GM12878 (cell line): ENCODE measurements at regions of chr6 and their contacts with region 1.

Region 1: GRCh38 chr6:113744861-113745260 is 112.3 kb upstream of the MARCKS start:
- DNase-seq: no peak
- ATAC-seq: no peak
- H3K4me3 ChIP-seq: no peak overlapping the region
- H3K27ac ChIP-seq: no peak overlapping the region
- H3K4me1 ChIP-seq: no peaks in the 10 kb centered on the region
- H3K27me3 ChIP-seq: no peaks in the 10 kb centered on the region
- CTCF ChIP-seq: no peak
- EP300 ChIP-seq: no peak
- POLR2A ChIP-seq: no peak
- RAD21 ChIP-seq: no peak

Region 2: DNA sequence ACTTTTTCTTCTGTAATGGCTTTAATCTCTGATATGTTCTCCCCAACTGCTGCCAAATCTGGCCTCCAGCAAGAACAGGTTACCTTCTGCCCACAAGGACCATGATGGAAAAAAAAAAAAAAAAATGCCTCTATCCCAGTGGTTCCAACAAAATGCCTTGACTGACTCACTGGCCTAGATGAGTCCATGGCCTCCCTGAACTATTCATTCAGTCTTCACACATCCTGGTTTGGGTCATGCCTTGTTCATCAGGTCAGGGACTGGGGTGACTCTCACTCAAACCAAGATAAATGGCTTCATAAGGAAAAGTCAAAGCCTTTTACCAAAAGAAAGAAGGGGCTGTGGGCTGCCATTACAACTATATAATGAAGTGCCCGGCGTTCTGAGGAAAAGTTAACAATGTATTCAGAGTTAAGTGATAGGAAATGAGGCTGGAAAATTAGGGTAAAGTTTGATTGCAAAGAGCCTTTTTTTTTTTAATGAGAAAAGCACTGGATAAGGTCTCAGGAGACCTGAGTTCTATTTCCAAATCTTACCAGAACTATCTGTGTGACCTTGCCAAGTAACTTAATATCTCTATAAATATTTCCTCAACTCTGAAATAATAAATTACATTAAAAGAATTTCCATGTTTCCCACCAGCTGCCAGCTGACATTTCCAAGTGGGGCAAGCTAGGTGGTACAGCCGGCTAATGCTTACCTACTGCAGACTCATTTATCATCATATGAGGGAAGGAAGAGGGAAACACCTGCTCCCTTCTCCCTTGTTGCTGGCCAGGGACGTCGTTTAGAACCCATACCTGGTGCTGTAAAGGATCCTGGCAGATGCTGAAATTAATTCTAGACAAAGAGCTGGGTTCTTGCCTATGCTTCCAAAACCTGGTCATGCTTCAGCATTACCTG is 267.7 kb before region 1 on chr6:
- CTCF ChIA-PET with region 1: no interaction called
- POLR2A ChIA-PET with region 1: no interaction called
- RAD21 ChIA-PET with region 1: no interaction called
- SMC1A ChIA-PET with region 1: no interaction called
- in situ Hi-C with region 1: no loop called
- intact Hi-C with region 1: no loop called
- DNase-seq: no peak
- ATAC-seq: no peak
- H3K4me3 ChIP-seq: no peak overlapping the region
- H3K27ac ChIP-seq: no peak overlapping the region
- H3K4me1 ChIP-seq: no peaks in the 10 kb centered on the region
- H3K27me3 ChIP-seq: no peaks in the 10 kb centered on the region
- CTCF ChIP-seq: no peak
- EP300 ChIP-seq: no peak
- POLR2A ChIP-seq: no peak
- RAD21 ChIP-seq: no peak

Region 3: GRCh38 chr6:113732384-113732966 is 12.4 kb before region 1 on chr6:
- CTCF ChIA-PET with region 1: interaction called, 4 read pairs
- POLR2A ChIA-PET with region 1: interaction called, 7 read pairs
- RAD21 ChIA-PET with region 1: no interaction called
- SMC1A ChIA-PET with region 1: interaction called, 15 read pairs
- in situ Hi-C with region 1: no loop called
- intact Hi-C with region 1: no loop called
- DNase-seq: no peak
- ATAC-seq: no peak
- H3K4me3 ChIP-seq: no peak overlapping the region
- H3K27ac ChIP-seq: no peak overlapping the region
- H3K4me1 ChIP-seq: no peaks in the 10 kb centered on the region
- H3K27me3 ChIP-seq: no peaks in the 10 kb centered on the region
- CTCF ChIP-seq: no peak
- EP300 ChIP-seq: no peak
- POLR2A ChIP-seq: no peak
- RAD21 ChIP-seq: no peak

Region 4: GRCh38 chr6:113980937-113981554 is 236.2 kb after region 1 on chr6:
- CTCF ChIA-PET with region 1: no interaction called
- POLR2A ChIA-PET with region 1: no interaction called
- RAD21 ChIA-PET with region 1: no interaction called
- SMC1A ChIA-PET with region 1: no interaction called
- in situ Hi-C with region 1: no loop called
- intact Hi-C with region 1: no loop called
- DNase-seq: no peak
- ATAC-seq: peak; percentile 92
- H3K4me3 ChIP-seq: no peak overlapping the region
- H3K27ac ChIP-seq: no peak overlapping the region
- H3K4me1 ChIP-seq: no peaks in the 10 kb centered on the region
- H3K27me3 ChIP-seq: no peaks in the 10 kb centered on the region
- CTCF ChIP-seq: peak; percentile 25 to 57 (median 45); a peak in 5 of 6 replicates
- EP300 ChIP-seq: no peak
- POLR2A ChIP-seq: no peak
- RAD21 ChIP-seq: 0 out of 2 replicates have a peak, but pooled peaks have one; percentile 15

Region 5: GRCh38 chr6:114024746-114025145 is 279.9 kb after region 1 on chr6:
- CTCF ChIA-PET with region 1: no interaction called
- POLR2A ChIA-PET with region 1: no interaction called
- RAD21 ChIA-PET with region 1: no interaction called
- SMC1A ChIA-PET with region 1: no interaction called
- in situ Hi-C with region 1: no loop called
- intact Hi-C with region 1: no loop called
- DNase-seq: no peak
- ATAC-seq: no peak
- H3K4me3 ChIP-seq: no peak overlapping the region
- H3K27ac ChIP-seq: no peak overlapping the region
- H3K4me1 ChIP-seq: no peaks in the 10 kb centered on the region
- H3K27me3 ChIP-seq: no peaks in the 10 kb centered on the region
- CTCF ChIP-seq: no peak
- EP300 ChIP-seq: no peak
- POLR2A ChIP-seq: no peak
- RAD21 ChIP-seq: no peak

Region 6: DNA sequence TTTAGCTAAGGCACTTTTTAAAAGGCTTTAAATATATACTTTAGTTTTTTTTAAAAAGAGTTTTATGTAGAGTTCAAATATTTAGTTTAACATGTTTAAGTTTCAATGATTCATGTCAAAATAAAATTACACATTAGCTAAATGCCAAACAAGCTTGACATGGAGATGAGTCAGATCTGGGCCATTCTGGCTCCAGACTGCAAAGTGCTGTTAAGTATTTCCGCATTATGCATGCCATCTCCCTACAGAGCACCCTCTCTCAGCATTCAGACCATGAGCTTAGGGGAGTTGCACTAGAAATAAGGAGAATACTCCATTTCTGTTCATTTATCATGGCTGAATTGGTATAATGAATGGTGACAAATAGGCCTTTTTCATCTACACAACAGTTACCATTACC is 619.4 kb after region 1 on chr6:
- CTCF ChIA-PET with region 1: no interaction called
- POLR2A ChIA-PET with region 1: no interaction called
- RAD21 ChIA-PET with region 1: no interaction called
- SMC1A ChIA-PET with region 1: no interaction called
- in situ Hi-C with region 1: no loop called
- intact Hi-C with region 1: no loop called
- DNase-seq: no peak
- ATAC-seq: no peak
- H3K4me3 ChIP-seq: no peak overlapping the region
- H3K27ac ChIP-seq: no peak overlapping the region
- H3K4me1 ChIP-seq: no peaks in the 10 kb centered on the region
- H3K27me3 ChIP-seq: no peaks in the 10 kb centered on the region
- CTCF ChIP-seq: no peak
- EP300 ChIP-seq: no peak
- POLR2A ChIP-seq: no peak
- RAD21 ChIP-seq: no peak